ENCODE measurements at regions of chr2 and their contacts with region 1.

Region 1: DNA sequence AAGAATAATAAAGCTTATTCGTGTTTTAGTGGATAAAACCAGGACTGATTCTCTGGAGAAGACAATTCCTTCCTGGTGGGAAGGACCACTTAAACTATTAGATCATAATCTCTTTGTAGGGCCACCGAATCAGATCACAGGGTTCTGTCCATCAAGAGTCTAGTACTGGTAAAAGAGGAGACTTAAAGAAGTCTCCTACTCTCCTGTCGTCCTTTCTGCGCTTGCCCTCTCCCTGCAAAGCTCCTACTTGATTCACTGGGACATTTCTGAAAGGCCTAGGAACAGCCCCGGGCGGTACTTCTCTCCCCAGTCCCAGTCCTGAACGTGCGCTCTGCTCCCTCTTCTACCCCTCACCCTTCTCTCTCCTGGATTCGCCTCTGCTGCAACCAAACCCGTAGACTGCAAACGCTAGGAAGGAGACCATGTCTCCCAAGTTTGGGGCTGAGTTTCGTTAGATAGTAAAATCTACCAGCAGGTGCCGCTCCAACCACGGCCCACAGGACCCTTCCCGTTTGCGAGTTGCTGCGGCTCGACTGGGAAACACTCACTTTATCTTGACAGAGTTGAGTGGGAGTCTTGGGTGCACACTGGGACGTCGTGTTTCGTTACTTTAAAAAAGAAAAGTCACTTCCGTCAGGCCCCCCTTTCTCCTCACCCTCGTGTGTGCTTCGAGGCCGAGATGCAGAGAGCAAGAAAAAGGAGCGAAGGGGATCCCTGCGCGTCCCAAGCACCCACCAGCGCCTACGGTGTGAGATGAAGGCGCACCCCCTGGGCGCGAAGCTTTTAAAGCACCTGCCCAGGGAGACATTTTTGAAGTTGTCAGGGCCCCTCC is 923 bp downstream of the FIGLA start:
- DNase-seq: peak; percentile 55
- H3K4me3 ChIP-seq: no peak overlapping the region
- H3K27ac ChIP-seq: no peak overlapping the region
- H3K4me1 ChIP-seq: peaks cover 11% of the 10 kb centered on the region
- H3K27me3 ChIP-seq: peaks cover 33% of the 10 kb centered on the region
- CTCF ChIP-seq: peak; percentile 39 to 72

Region 2: GRCh38 chr2:70656421-70657010 is 133.0 kb before region 1 on chr2:
- CTCF ChIA-PET with region 1: interaction called, 15 read pairs
- dilution Hi-C with region 1: no loop called
- in situ Hi-C with region 1: no loop called
- intact Hi-C with region 1: loop called (anchors 1 kb)
- DNase-seq: no peak
- H3K4me3 ChIP-seq: no peak overlapping the region
- H3K27ac ChIP-seq: no peak overlapping the region
- H3K4me1 ChIP-seq: no peaks in the 10 kb centered on the region
- H3K27me3 ChIP-seq: peaks cover 4% of the 10 kb centered on the region
- CTCF ChIP-seq: no peak

Region 3: DNA sequence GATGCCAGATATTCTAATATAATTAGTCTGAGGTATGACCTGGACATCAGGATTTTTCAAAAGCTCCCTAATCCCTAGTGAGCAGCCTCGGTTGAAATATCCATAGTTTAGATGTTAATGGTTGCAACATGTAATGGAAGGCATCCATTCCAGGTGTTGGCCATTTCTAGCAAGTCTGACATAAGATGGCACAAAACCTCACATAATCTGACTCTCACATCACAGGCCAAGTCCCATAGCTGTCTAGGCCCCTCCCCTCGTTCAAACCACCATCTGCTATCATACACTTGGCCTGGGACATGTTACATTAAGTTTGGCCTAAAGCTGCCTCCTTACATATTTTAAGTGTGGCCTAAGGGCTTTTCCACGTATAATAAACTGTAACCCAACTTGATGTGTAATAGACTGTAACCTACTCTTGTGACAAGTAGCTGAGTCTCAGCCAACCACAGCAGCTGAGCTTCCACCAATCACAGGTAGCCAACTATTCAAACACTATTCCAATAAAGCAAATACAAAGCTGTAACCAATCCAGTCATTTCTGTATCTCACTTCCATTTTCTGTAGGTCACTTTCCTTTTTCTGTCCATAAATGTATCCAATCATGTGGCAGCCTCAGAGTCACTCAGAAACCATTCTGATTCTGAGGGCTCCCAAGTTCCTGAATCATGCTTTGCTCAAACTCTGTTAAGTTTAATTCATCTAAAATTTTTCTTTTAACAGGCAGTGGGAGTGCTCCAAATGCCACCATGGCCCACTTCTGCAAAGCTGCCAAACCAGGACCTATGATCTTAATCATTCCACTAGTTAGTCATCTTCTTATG is 80.9 kb before region 1 on chr2:
- CTCF ChIA-PET with region 1: no interaction called
- dilution Hi-C with region 1: loop called (anchors 5 kb)
- in situ Hi-C with region 1: no loop called
- intact Hi-C with region 1: no loop called
- DNase-seq: no peak
- H3K4me3 ChIP-seq: no peak overlapping the region
- H3K27ac ChIP-seq: no peak overlapping the region
- H3K4me1 ChIP-seq: no peaks in the 10 kb centered on the region
- H3K27me3 ChIP-seq: no peaks in the 10 kb centered on the region
- CTCF ChIP-seq: no peak

Region 4: GRCh38 chr2:70759446-70759845 is 30.1 kb before region 1 on chr2:
- CTCF ChIA-PET with region 1: interaction called, 7 read pairs
- dilution Hi-C with region 1: loop called (anchors 5 kb)
- in situ Hi-C with region 1: no loop called
- intact Hi-C with region 1: no loop called
- DNase-seq: no peak
- H3K4me3 ChIP-seq: no peak overlapping the region
- H3K27ac ChIP-seq: no peak overlapping the region
- H3K4me1 ChIP-seq: no peaks in the 10 kb centered on the region
- H3K27me3 ChIP-seq: no peaks in the 10 kb centered on the region
- CTCF ChIP-seq: no peak

Region 5: DNA sequence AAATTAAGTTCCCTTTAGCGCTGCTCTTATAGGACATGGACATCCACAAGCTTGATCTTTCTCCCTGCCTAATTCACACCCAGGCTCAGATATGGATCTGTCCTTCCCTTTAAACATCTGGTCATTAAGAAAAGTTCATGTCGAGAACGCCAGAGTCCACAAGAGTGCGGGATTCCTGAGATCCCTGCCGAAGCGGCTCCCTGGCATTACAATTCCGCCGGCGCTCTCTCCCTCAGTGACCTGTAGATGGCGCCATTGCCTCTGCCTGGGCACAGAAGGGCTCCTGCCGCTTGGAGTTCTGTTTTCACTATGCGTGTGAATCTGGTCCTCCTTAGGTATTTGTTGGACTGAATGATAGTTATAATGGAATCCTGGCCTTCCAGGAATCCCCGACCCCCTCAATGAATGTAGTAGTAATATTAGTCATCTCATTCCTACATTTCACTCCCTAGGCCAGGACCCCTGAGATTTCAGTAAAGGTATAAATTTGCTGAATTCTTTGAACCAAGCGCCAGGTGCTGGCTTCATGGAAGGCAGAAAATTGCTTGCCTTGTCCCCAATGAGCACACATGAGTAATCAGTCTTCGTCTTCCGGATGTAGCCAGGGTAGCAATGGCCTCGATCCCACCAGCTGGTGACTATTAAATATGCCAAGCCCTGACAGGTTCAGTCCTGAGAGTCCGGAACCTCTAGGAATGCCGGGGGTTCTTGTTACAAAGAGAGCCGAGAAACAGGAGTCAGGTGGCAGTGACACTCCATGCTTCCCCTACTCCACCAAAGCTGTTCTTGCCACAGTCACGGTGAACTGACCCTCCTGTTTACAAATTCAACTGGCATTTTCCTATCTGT is 72.5 kb after region 1 on chr2:
- CTCF ChIA-PET with region 1: no interaction called
- dilution Hi-C with region 1: loop called (anchors 5 kb)
- in situ Hi-C with region 1: no loop called
- intact Hi-C with region 1: loop called (anchors 1 kb)
- DNase-seq: peak; percentile 54
- H3K4me3 ChIP-seq: no peak overlapping the region
- H3K27ac ChIP-seq: no peak overlapping the region
- H3K4me1 ChIP-seq: no peaks in the 10 kb centered on the region
- H3K27me3 ChIP-seq: peaks cover 8% of the 10 kb centered on the region
- CTCF ChIP-seq: peak; percentile 95 to 98

Region 6: GRCh38 chr2:70919672-70920366 is 130.3 kb after region 1 on chr2:
- CTCF ChIA-PET with region 1: no interaction called
- dilution Hi-C with region 1: no loop called
- in situ Hi-C with region 1: no loop called
- intact Hi-C with region 1: loop called (anchors 2 kb)
- DNase-seq: peak; percentile 60
- H3K4me3 ChIP-seq: no peak overlapping the region
- H3K27ac ChIP-seq: no peak overlapping the region
- H3K4me1 ChIP-seq: no peaks in the 10 kb centered on the region
- H3K27me3 ChIP-seq: no peaks in the 10 kb centered on the region
- CTCF ChIP-seq: peak; percentile 90 to 93

Region 7: GRCh38 chr2:70948337-70949003 is 158.9 kb after region 1 on chr2:
- CTCF ChIA-PET with region 1: no interaction called
- dilution Hi-C with region 1: no loop called
- in situ Hi-C with region 1: no loop called
- intact Hi-C with region 1: loop called (anchors 1 kb)
- DNase-seq: peak; percentile 50
- H3K4me3 ChIP-seq: peak overlapping the region in 2 of 3 experiments; percentile 20 to 22
- H3K27ac ChIP-seq: no peak overlapping the region
- H3K4me1 ChIP-seq: peaks cover 3% of the 10 kb centered on the region
- H3K27me3 ChIP-seq: peaks cover 2% of the 10 kb centered on the region
- CTCF ChIP-seq: peak; percentile 71 to 89